AG04449 (cell line): ENCODE measurements at regions of chr15 and their contacts with region 1.

Region 1: GRCh38 chr15:40274350-40275274 is 8.3 kb downstream of the ANKRD63 start:
- DNase-seq: peak; percentile 16
- H3K4me3 ChIP-seq: no peak overlapping the region
- CTCF ChIP-seq: peak; percentile 100

Region 2: DNA sequence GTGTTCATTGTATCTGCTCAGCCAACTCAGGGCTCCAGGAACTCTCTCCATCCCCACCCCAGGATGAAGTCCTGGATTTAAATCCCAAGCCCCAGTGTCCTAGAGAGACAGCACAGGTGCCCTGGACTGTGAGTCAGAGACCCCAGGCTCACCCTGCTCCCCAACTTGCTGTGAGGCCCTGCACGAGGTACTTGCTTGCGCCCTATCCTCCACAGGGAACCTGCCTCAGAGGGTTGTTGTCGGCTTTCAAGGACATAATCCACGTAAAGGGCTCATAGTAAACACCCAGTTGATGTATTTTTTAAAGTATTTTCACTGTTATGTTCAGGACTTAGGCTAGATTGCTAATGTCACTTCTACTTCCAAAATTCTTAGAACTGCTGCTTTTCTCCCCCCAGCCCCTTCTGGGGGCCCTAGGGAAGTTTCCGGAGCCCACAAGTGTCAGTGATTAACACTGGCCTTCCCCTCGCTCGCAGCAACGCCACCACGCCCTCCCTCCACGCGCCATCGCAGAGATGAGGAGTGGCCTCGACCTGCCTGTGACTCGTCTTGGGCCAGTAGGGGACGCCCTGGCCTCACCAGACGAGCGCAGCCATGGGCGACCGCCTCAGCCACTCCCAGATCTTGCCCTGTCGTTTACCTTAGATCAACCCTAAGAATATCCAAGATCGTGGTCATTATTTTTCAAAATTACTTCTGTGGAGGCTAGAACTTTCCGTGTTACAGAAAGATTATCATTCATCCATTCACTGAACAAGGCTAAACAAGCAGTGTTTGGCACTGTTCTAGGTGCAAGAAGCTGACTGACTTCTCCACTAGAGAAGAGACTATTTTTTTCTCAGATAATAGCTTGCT is 229.7 kb before region 1 on chr15:
- CTCF ChIA-PET with region 1: interaction called, 286 read pairs
- POLR2A ChIA-PET with region 1: no interaction called
- DNase-seq: no peak
- H3K4me3 ChIP-seq: peak overlapping the region; percentile 36
- CTCF ChIP-seq: peak; percentile 99

Region 3: DNA sequence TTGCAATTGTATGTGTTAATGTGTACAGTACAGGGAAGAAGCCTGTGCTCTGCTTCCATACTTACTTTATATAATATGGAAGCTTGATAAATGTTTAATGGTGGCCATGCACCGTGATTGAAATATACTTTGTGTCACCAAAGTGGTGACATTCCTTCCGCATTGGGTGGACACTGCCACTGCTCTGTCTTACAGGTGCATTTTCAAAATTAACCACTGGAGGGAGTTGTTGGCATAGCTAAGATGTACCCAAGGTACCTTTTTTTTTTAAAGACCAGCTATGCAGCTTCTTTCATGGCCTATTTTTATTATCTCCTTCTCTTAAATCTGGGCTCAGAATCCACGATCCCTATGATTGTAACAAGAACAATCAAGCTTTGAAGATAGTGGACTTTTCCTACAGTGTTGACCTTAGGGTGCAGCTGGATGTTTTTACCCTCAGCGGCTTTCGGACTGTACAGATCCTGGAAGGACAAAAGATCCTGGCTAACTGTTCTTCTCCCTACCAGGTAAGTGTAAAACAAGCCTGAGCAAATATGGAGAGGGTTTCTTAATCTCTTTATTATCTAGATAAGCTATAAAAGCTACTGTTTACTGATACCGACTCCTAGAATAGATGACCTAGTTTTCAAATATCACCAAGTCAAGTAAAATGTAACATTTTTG is 57.3 kb before region 1 on chr15:
- CTCF ChIA-PET with region 1: interaction called, 1,718 read pairs
- POLR2A ChIA-PET with region 1: no interaction called
- DNase-seq: peak; percentile 12
- H3K4me3 ChIP-seq: no peak overlapping the region
- CTCF ChIP-seq: peak; percentile 60

Region 4: DNA sequence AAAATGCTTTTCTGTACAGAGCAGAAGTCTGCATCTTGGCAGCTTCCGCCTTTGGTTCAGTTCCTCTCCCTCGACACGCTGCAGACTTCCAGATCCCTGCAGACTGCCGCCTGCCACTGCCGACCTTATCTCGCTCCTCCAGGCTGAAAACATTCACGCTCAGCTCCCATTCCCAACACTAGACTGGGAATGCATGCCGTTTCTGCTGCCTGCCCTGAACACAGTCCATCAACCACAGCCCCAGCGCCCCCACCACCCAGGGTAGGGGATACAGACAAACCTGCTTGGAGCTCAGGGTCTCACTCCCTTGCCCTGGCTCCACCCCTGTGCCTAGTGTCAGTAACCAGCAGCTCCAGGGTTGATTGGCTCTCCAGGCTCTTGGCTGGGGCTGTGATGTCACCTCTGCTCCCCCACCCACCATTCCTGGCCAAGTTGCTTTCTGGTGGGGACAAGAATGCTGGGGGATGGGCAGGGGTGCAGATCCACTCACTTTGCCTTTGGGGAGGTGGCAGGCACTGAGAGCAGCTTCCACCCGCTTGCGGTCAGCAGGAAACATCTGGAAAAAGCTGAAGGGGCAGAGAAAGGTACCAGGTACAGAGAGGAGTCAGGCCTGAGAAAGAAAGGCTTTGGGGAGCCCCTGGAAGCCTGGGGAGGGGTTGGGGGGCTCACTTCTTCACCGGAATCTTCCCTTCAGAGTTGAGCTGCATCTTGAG is 27.0 kb after region 1 on chr15:
- CTCF ChIA-PET with region 1: interaction called, 500 read pairs
- POLR2A ChIA-PET with region 1: no interaction called
- DNase-seq: no peak
- H3K4me3 ChIP-seq: no peak overlapping the region
- CTCF ChIP-seq: no peak

Region 5: GRCh38 chr15:40344631-40345120 is 70.1 kb after region 1 on chr15:
- CTCF ChIA-PET with region 1: interaction called, 113 read pairs
- POLR2A ChIA-PET with region 1: no interaction called
- DNase-seq: no peak
- H3K4me3 ChIP-seq: no peak overlapping the region
- CTCF ChIP-seq: peak; percentile 86

Region 6: DNA sequence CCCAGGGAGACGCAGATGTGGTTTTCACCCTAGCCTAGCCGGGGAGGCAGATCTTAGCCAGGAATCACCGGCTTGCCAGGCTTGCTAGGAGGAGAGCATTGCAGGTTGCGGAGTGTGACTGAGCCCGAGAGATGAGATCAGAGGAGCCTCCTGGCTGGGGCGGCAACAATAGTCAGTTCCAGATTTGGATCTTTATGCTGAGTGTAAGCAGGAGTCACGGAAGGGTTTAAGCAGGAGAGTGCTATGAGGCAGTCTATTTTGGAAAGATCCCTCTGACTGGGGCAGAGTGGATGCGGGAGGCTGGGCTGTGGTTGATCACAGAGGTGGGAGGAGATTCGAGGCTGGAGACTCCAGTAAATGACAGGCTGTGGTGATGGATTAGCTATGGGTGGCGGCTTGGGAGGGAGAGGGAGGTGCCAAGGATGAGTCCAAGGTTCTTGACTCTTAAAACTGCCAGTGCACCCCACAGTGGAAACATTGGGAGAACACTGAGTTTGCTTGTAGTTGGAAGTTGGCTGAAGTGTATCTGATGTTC is 155.7 kb after region 1 on chr15:
- CTCF ChIA-PET with region 1: interaction called, 14 read pairs
- POLR2A ChIA-PET with region 1: no interaction called
- DNase-seq: no peak
- H3K4me3 ChIP-seq: no peak overlapping the region; the same call in 1 of the 2 replicates
- CTCF ChIP-seq: no peak